ENCODE measurements at regions of chr10 and their contacts with region 1.

Region 1: DNA sequence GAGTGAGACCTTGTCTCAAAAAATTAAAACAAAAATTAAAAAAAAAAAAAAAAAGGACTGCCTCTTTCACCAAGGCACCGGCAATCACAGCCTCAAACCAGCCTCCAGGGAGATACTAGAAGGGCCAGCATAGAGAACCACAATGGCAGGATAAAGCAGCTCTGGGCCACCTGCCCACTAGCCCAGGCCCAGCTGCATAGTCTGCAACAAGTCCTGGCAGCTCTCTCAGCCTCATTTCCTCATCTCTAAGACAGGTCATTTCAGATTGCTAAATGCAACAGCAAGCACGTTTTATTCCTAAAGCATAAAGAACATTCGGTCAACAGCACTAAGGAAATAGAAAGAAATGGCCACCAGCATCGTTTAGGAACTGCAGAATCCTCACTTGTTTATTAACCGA is 28.8 kb downstream of the XPNPEP1 start:
- DNase-seq: peak; percentile 78 to 90 (median 84)
- ATAC-seq: peak; percentile 68 to 78 (median 76)
- H3K4me3 ChIP-seq: peak overlapping the region in 2 of 12 donors; percentile 1 to 9
- H3K27ac ChIP-seq: peak overlapping the region; percentile 47 to 85 (median 78)
- H3K4me1 ChIP-seq: peaks cover 22 to 96% (median 82%) of the 10 kb centered on the region in 12 donors
- H3K27me3 ChIP-seq: no peaks in the 10 kb centered on the region
- CTCF ChIP-seq: no peak
- POLR2A ChIP-seq: no peak

Region 2: GRCh38 chr10:109721453-109722064 is 173.0 kb before region 1 on chr10:
- intact Hi-C with region 1: no loop called
- DNase-seq: no peak
- ATAC-seq: no peak
- H3K4me3 ChIP-seq: no peak overlapping the region
- H3K27ac ChIP-seq: no peak overlapping the region
- H3K4me1 ChIP-seq: no peaks in the 10 kb centered on the region
- H3K27me3 ChIP-seq: peaks cover 0 to 3% (median 0%) of the 10 kb centered on the region in 9 donors
- CTCF ChIP-seq: no peak
- POLR2A ChIP-seq: no peak

Region 3: DNA sequence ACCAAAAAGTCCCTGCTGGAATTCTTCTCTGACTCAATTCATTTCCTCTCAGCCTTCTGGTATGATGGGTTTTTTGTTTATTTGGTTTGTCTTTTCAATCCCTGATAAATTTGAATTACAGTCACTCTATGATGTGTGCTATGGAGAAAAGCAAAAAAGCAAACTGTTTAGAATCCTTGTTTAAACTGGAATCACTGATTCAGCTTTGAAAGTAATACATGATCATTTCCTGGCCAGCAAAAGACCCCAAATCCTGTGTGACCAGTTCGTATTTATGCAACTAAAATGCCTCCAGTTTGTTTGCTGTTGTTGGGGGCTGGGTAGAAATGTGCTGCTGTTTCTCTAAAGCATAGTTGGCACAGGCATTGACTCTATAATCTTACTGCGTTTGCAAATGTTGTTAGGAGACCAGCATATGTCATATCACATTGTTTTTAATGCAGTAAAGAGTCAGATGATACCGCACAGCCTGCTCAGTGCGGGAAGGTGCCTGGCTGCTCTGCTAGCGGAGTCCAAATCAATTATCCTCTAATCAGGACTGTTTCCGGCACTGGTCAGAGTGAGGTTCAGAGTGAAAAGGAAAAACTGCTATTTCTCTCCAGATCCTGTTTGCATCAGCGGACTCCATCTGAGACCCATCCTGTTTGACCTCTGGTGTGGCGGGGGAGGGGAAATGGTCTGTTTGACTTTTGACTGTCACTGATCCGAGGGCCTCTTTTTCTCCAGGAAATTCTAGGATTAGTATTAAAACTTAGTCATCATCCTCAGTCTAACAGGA is 72.6 kb after region 1 on chr10:
- intact Hi-C with region 1: loop called in 5 of 10 experiments (anchors 5 to 10 kb)
- DNase-seq: peak in 4 of 5 donors; percentile 35 to 62 (median 48)
- ATAC-seq: peak in 3 of 4 donors; percentile 24 to 51 (median 31)
- H3K4me3 ChIP-seq: no peak overlapping the region
- H3K27ac ChIP-seq: peak overlapping the region in 9 of 12 donors; percentile 25 to 70 (median 57)
- H3K4me1 ChIP-seq: peaks cover 0 to 57% (median 34%) of the 10 kb centered on the region in 12 donors
- H3K27me3 ChIP-seq: no peaks in the 10 kb centered on the region
- CTCF ChIP-seq: no peak
- POLR2A ChIP-seq: no peak

Region 4: GRCh38 chr10:109987452-109988211 is 93.1 kb after region 1 on chr10:
- intact Hi-C with region 1: no loop called
- DNase-seq: no peak
- ATAC-seq: peak in 2 of 4 donors; percentile 48 to 88
- H3K4me3 ChIP-seq: no peak overlapping the region
- H3K27ac ChIP-seq: no peak overlapping the region
- H3K4me1 ChIP-seq: peaks cover 0 to 10% (median under 1%) of the 10 kb centered on the region in 12 donors
- H3K27me3 ChIP-seq: no peaks in the 10 kb centered on the region
- CTCF ChIP-seq: no peak
- POLR2A ChIP-seq: no peak

Region 5: GRCh38 chr10:110118891-110119621 is 224.5 kb after region 1 on chr10:
- intact Hi-C with region 1: loop called in 4 of 10 experiments (anchors 5 kb)
- DNase-seq: no peak
- ATAC-seq: peak; percentile 90 to 95 (median 91)
- H3K4me3 ChIP-seq: peak overlapping the region in 1 of 12 donors; percentile 21
- H3K27ac ChIP-seq: peak overlapping the region; percentile 38 to 91 (median 70)
- H3K4me1 ChIP-seq: peaks cover 3 to 16% (median 6%) of the 10 kb centered on the region in 12 donors
- H3K27me3 ChIP-seq: no peaks in the 10 kb centered on the region
- CTCF ChIP-seq: no peak
- POLR2A ChIP-seq: no peak

Region 6: GRCh38 chr10:110137142-110137545 is 242.6 kb after region 1 on chr10:
- intact Hi-C with region 1: loop called in 5 of 10 experiments (anchors 5 to 10 kb)
- DNase-seq: no peak
- ATAC-seq: peak; percentile 58 to 79 (median 78)
- H3K4me3 ChIP-seq: peak overlapping the region in 1 of 12 donors; percentile 33
- H3K27ac ChIP-seq: peak overlapping the region in 8 of 12 donors; percentile 10 to 84 (median 42)
- H3K4me1 ChIP-seq: peaks cover 4 to 43% (median 19%) of the 10 kb centered on the region in 12 donors
- H3K27me3 ChIP-seq: no peaks in the 10 kb centered on the region
- CTCF ChIP-seq: peak; percentile 67 to 90 (median 82)
- POLR2A ChIP-seq: no peak

Region 7: DNA sequence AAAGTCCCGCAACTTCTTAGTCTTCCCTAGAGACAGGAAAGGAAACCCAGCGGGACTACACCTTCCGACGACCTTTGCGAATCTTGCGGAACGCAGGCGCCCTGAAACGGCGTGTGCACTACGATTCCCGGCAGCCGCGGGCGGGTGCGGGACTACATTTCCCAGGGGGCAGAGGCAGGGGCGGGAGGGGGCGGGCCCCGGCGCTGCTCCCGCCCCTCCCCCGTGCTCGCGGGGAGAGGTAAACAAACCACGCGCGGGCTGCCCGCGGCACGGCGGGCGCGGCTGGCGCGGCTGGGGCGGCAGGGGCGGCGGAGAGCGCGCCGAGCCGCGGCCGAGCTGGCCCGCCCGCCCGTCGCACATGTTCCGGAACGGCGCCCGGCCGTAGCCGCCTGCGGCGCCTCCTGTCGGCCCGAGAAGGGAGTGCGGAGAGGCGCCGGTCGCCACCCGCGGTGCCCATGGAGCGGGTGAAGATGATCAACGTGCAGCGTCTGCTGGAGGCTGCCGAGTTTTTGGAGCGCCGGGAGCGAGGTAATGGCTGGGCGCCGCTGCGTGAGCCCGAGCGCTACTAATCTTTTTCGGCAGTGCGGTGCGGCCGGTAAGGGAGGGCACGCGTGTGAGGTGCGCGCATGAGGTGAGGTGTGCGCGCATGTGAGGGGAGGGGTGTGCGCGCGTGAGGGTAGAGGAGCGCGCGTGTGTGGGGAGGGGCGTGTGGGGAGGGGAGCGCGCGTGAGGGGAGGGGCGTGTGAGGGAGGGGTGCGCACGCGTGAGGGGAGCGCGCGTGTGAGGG is 331.4 kb after region 1 on chr10:
- intact Hi-C with region 1: loop called in 4 of 10 experiments (anchors 5 to 10 kb)
- DNase-seq: peak; percentile 92 to 95 (median 95)
- ATAC-seq: peak; percentile 55 to 78 (median 70)
- H3K4me3 ChIP-seq: peak overlapping the region; percentile 50 to 93 (median 87)
- H3K27ac ChIP-seq: peak overlapping the region; percentile 76 to 96 (median 88)
- H3K4me1 ChIP-seq: peaks cover 12 to 61% (median 39%) of the 10 kb centered on the region in 12 donors
- H3K27me3 ChIP-seq: no peaks in the 10 kb centered on the region
- CTCF ChIP-seq: peak; percentile 55 to 91 (median 72)
- POLR2A ChIP-seq: peak in 1 of 2 donors; percentile 39

Region 8: DNA sequence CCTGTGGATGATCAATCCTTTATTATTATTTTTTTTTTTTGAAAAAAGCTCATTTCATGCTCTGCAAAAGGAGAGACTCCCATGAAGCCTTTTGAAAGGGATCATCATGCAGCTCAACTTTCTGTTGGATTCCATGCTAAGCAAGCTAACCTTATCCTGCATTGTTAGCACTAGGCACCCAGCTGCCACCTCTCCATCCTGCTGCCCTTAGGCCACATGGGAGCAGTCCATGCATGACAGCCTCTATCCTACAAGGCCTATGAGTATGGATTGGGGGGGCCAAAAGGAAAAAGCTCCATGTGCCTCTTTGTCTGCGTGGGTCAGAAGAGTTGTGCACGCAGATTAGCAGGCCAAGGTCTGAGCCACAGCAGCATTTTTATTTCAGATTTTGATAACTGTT is 391.0 kb after region 1 on chr10:
- intact Hi-C with region 1: loop called in 2 of 10 experiments (anchors 5 to 10 kb)
- DNase-seq: no peak
- ATAC-seq: peak in 1 of 4 donors; percentile 19
- H3K4me3 ChIP-seq: no peak overlapping the region
- H3K27ac ChIP-seq: no peak overlapping the region
- H3K4me1 ChIP-seq: peaks cover 0 to 11% (median 0%) of the 10 kb centered on the region in 12 donors
- H3K27me3 ChIP-seq: no peaks in the 10 kb centered on the region
- CTCF ChIP-seq: no peak
- POLR2A ChIP-seq: no peak